ENCODE measurements at regions of chr15 and their contacts with region 1.

Region 1: GRCh38 chr15:67521029-67521811 is at the start of gene C15orf61:
- DNase-seq: peak; percentile 84
- H3K4me3 ChIP-seq: peak within 1 kb of the TSS; percentile 77 to 95 (median 81)
- H3K27ac ChIP-seq: peak within 1 kb of the TSS; percentile 63
- H3K4me1 ChIP-seq: peaks cover 17% of the 10 kb centered on the region
- H3K27me3 ChIP-seq: no peaks in the 10 kb centered on the region
- CTCF ChIP-seq: no peak
- POLR2A ChIP-seq: peak; percentile 34
- total RNA-seq, gene C15orf61: 3.7 and 4.1 TPM in 2 replicates

Region 2: DNA sequence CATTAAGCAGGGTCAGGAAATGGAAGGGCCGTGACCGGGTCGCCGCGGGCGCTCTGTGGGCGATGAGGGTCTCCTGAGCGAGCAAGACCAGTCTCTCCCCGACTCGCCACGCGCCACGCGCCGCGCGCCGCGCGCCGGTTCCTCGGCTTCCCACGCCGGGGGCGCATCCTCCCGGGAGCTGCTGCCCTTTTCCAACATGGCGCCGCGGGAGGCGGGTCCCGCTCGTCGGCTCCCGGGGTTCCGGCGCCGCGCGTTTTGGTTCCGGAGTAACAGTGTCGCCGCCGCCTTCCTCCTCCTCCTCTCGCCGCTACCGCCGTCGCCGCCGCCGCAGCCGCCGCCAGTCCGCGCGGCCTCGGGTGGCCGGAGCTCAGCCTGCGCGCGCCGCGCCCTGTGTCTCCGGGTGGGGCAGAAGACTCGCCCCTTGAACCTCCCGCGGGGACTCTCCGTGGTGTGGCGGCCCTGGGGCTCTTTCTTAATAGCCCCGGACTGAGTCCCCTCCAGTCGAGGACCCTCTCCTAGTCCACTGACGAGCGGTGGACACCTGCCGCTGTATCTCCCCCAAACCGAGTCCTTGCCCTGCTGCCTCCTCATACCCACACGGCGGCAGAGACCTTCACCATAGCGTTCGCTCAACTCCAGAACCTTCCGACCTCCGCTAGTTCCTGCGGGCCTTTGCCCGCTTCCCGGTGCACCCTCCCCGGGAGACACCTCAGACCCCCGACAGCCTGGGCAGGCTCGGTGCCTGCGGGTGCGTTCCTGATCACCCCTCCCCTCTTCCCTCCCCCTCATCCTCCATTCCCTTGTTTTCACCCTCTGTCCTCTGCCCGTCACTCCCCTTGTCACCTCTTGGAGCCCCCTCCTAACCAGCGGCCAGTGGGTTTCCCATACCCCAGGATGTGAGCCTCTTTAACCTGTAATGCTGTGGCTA is 21.5 kb after region 1 on chr15 and contains the start of gene MAP2K5:
- CTCF ChIA-PET with region 1: interaction called, 4 read pairs
- POLR2A ChIA-PET with region 1: interaction called, 4 read pairs
- dilution Hi-C with region 1: no loop called
- intact Hi-C with region 1: loop called (anchors 1 kb)
- DNase-seq: peak; percentile 77
- H3K4me3 ChIP-seq: peak within 1 kb of the TSS; percentile 67 to 99 (median 96)
- H3K27ac ChIP-seq: peak within 1 kb of the TSS; percentile 65
- H3K4me1 ChIP-seq: peaks cover 8% of the 10 kb centered on the region
- H3K27me3 ChIP-seq: no peaks in the 10 kb centered on the region
- CTCF ChIP-seq: no peak
- POLR2A ChIP-seq: peak; percentile 84
- total RNA-seq, gene MAP2K5: 24.2 and 24.7 TPM in 2 replicates